ENCODE measurements at regions of chr9 and their contacts with region 1.

Region 1: DNA sequence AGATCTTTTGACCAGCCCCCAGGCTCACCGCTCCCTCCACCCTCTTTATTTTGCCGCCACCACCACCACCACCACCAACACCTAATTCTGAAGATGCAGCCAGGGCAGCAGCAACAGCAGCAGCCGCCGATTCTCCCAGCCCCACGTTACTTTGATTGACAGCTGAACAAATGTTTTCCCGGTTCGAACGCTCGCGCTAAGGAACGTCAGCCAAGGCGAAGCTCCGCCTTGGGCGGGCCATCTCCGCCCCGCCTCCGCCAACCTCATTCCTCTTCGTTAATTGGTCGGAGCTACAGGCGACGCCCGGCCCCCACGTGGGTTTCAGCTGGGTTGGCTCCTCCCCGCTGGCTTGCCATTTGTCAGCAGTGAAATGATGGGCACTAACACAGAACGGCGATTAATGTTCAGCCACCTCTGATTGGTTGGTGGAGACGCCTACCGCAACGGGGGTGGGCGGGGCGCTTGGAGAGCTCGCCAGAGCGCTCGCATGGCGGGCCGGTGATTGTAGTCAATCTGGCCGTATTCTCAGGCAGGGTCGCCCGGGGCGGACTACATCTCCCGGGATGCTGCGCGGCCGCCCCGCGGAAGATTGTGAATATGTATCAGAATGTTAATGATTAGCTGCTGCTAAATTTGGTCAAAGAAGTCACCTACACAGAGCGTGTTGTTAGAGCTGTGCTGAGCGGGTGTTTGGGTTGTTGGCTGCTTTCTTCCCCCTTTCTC is at the start of gene TLE4:
- DNase-seq: peak; percentile 96 to 100 (median 100)
- ATAC-seq: peak; percentile 85 to 91 (median 86)
- H3K4me3 ChIP-seq: peak within 1 kb of the TSS; percentile 90 to 95
- H3K4me3 Mint-ChIP-seq: peak within 1 kb of the TSS in 2 of 3 donors; percentile 68 to 78
- H3K27ac ChIP-seq: peak within 1 kb of the TSS; percentile 88
- H3K27ac Mint-ChIP-seq: peak within 1 kb of the TSS in 1 of 2 donors; percentile 55
- H3K4me1 ChIP-seq: peaks cover 18 to 22% of the 10 kb centered on the region in 2 experiments
- H3K4me1 Mint-ChIP-seq: peaks cover 28 to 34% (median 33%) of the 10 kb centered on the region in 3 donors
- H3K27me3 ChIP-seq: peaks cover 0 to 11% of the 10 kb centered on the region in 2 experiments
- H3K27me3 Mint-ChIP-seq: peaks cover 3 to 11% of the 10 kb centered on the region in 2 donors
- total RNA-seq, gene TLE4: 65.9 to 138 (median 78.7) TPM

Region 2: GRCh38 chr9:79542735-79543620 is 28.5 kb before region 1 on chr9:
- CTCF ChIA-PET with region 1: interaction called, 4 to 5 read pairs
- POLR2A ChIA-PET with region 1: interaction called, 5 to 16 read pairs
- DNase-seq: no peak
- ATAC-seq: no peak
- H3K4me3 ChIP-seq: no peak overlapping the region
- H3K4me3 Mint-ChIP-seq: no peak overlapping the region
- H3K27ac ChIP-seq: no peak overlapping the region
- H3K27ac Mint-ChIP-seq: no peak overlapping the region
- H3K4me1 ChIP-seq: peaks cover 2 to 9% of the 10 kb centered on the region in 2 experiments
- H3K4me1 Mint-ChIP-seq: peaks cover 22 to 29% (median 24%) of the 10 kb centered on the region in 3 donors
- H3K27me3 ChIP-seq: peaks cover 0 to 4% of the 10 kb centered on the region in 2 experiments
- H3K27me3 Mint-ChIP-seq: peaks cover 0 to 3% of the 10 kb centered on the region in 2 donors

Region 3: GRCh38 chr9:79583952-79584654 is 12.6 kb after region 1 on chr9:
- CTCF ChIA-PET with region 1: interaction called in 1 of 2 experiments, 3 read pairs
- POLR2A ChIA-PET with region 1: interaction called, 4 to 47 read pairs
- DNase-seq: peak in 26 of 35 experiments; percentile 9 to 52 (median 23)
- ATAC-seq: peak; percentile 15 to 62 (median 43)
- H3K4me3 ChIP-seq: no peak overlapping the region
- H3K4me3 Mint-ChIP-seq: peak overlapping the region; percentile 25 to 54 (median 31)
- H3K27ac ChIP-seq: no peak overlapping the region
- H3K27ac Mint-ChIP-seq: peak overlapping the region; percentile 68 to 77
- H3K4me1 ChIP-seq: peaks cover 29 to 31% of the 10 kb centered on the region in 2 experiments
- H3K4me1 Mint-ChIP-seq: peaks cover 75 to 87% (median 84%) of the 10 kb centered on the region in 3 donors
- H3K27me3 ChIP-seq: no peaks in the 10 kb centered on the region
- H3K27me3 Mint-ChIP-seq: no peaks in the 10 kb centered on the region

Region 4: DNA sequence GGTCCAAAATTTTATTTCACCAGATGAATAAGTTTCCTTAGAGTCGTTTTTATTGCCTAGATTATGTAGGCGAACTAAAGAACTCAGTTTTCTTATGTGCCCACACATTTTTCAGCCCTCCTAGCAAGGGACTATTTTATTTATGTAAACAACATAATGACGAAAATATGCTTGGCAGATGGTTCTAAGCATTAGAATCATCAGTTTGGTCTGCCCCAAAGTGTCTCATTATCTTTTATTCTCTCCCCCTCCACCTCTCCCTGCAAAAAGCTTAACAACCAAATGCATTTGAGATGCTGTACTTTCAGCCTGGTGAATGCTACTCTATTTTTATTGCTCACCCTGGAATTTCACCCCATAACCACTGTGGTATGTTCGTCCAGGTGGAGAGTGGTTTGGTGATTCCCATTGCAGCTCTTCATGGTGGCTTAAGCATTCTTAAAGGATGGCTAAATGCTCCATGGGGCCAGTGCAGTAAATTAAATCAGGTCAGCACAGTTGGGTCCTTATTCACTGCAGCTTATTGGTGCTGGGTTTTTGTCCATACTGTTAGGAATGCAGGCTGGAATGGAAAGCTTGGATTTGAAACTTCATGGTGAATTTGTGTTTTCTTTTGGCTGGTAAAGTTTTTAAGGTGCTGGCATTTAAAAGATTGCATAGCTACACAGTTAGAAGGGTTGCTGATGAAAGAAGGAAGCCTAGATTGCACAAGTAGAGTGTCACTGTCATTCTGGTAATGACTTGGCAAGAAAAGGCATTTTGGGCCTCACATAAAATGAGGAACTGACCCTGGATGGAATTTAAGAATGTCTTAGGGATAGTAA is 39.5 kb after region 1 on chr9:
- CTCF ChIA-PET with region 1: no interaction called
- POLR2A ChIA-PET with region 1: interaction called, 3 to 12 read pairs
- DNase-seq: no peak
- ATAC-seq: no peak
- H3K4me3 ChIP-seq: no peak overlapping the region
- H3K4me3 Mint-ChIP-seq: no peak overlapping the region
- H3K27ac ChIP-seq: no peak overlapping the region
- H3K27ac Mint-ChIP-seq: peak overlapping the region in 1 of 2 donors; percentile 17
- H3K4me1 ChIP-seq: no peaks in the 10 kb centered on the region
- H3K4me1 Mint-ChIP-seq: peaks cover 59 to 70% (median 61%) of the 10 kb centered on the region in 3 donors
- H3K27me3 ChIP-seq: no peaks in the 10 kb centered on the region
- H3K27me3 Mint-ChIP-seq: no peaks in the 10 kb centered on the region

Region 5: DNA sequence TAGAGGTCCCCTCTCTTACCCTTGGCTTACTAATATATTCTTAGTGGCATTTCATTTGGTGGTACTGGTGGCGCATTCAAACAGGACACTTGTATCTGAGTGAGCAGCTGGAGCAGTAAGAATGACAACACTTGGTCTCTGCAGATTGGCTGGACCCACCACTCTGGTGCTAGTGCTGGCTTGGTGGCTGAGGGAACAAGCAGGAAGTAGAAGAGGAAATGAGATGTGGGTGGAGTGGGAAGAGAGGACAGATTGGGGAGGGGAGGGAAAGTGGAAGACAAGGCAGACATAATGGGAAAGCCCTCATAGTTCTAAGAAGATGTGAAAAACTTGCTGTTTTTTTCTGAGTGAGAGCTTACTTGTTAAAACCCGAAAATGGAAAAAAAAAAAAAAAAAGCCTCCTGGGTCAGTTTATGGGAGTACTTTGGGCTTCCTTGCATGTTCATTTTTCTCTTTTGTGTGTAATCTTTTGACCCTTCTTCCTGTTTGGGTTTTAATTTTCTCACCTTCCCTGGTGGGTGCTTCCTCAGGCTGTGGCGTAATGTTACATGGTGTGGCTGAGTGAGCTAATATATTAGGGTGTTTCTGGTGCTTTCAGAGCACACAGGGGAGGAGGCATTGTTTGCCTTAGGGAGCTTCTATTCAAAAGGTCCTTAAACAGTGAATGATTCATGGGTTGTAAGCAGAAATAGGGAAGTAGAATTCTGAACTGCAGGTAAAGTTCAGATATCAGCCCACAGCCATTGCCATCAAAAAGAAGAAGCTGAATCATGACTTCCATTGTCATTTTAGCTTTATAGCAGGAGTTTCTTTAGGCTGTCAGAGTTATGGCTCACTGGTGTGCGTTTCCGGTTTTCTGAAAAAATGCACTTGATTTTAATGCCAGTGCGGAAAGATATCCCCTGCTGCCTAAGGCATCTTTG is 52.6 kb after region 1 on chr9:
- CTCF ChIA-PET with region 1: interaction called in 1 of 2 experiments, 8 read pairs
- POLR2A ChIA-PET with region 1: interaction called in 1 of 2 experiments, 13 read pairs
- DNase-seq: peak in 32 of 35 experiments; percentile 2 to 70 (median 25)
- ATAC-seq: peak; percentile 66 to 84 (median 79)
- H3K4me3 ChIP-seq: peak overlapping the region in 1 of 2 donors; percentile 15
- H3K4me3 Mint-ChIP-seq: peak overlapping the region; percentile 25 to 51 (median 41)
- H3K27ac ChIP-seq: peak overlapping the region; percentile 61
- H3K27ac Mint-ChIP-seq: peak overlapping the region; percentile 82 to 83
- H3K4me1 ChIP-seq: peaks cover 12 to 18% of the 10 kb centered on the region in 2 experiments
- H3K4me1 Mint-ChIP-seq: peaks cover 56 to 72% (median 62%) of the 10 kb centered on the region in 3 donors
- H3K27me3 ChIP-seq: no peaks in the 10 kb centered on the region
- H3K27me3 Mint-ChIP-seq: no peaks in the 10 kb centered on the region